GM10248 (cell line): ENCODE measurements at regions of chr6 and their contacts with region 1.

Region 1: GRCh38 chr6:32933636-32934085 is 7.2 kb downstream of the HLA-DMB start:
- DNase-seq: peak; percentile 54
- CTCF ChIP-seq: peak; percentile 81

Region 2: GRCh38 chr6:32843979-32844838 is 89.5 kb before region 1 on chr6 and contains the start of gene PSMB8:
- CTCF ChIA-PET with region 1: interaction called, 17 read pairs
- POLR2A ChIA-PET with region 1: no interaction called
- DNase-seq: peak; percentile 92
- CTCF ChIP-seq: no peak

Region 3: GRCh38 chr6:32894080-32895005 is 39.3 kb before region 1 on chr6:
- CTCF ChIA-PET with region 1: interaction called, 10 read pairs
- POLR2A ChIA-PET with region 1: no interaction called
- DNase-seq: peak; percentile 100
- CTCF ChIP-seq: no peak

Region 4: GRCh38 chr6:32912951-32913350 is 20.7 kb before region 1 on chr6:
- CTCF ChIA-PET with region 1: interaction called, 36 read pairs
- POLR2A ChIA-PET with region 1: no interaction called
- DNase-seq: no peak
- CTCF ChIP-seq: no peak

Region 5: DNA sequence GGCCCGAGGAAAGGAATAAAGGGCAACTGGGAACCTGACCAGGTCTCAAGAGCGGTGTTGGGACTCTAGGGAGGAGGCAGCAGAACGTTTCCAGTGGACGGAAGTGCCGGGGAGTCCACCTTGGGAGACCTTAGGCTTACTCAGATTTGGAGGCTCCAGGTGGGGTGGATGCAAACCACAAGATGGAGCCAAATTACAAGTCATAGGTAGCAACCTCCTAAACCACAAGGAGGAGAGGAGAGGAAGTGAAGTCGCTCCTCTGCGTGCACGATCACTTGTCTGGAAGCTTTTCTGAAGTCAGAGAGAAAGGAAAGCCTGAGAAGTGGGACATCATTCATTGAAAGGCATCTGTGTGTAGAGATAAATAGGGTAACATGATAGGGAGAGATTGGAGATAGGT is 66.4 kb after region 1 on chr6:
- CTCF ChIA-PET with region 1: interaction called, 10 read pairs
- POLR2A ChIA-PET with region 1: no interaction called
- DNase-seq: peak; percentile 60
- CTCF ChIP-seq: peak; percentile 31